ENCODE measurements at regions of chr13 and their contacts with region 1.

Region 1: DNA sequence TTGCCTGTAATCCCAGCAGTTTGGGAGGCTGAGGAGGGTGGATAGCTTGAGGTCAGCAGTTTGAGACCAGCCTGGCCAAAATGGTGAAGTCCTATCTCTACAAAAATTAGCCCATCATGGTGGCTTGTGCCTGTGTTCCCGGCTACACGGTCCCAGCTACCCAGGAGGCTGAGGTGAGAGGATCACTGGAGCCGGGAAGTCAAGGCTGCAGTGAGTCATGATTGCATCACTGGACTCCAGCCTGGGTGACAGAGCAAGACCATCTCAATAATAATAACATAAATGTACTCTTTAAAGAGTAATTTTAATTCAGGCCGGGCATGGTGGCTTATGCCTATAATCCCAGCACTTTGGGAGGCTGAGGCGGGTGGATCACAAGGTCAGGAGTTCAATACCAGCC is 38.7 kb downstream of the SKA3 start:
- DNase-seq: peak in 1 of 14 experiments; percentile 18
- ATAC-seq: no peak
- H3K4me3 ChIP-seq: no peak overlapping the region
- H3K4me3 Mint-ChIP-seq: no peak overlapping the region
- H3K27ac ChIP-seq: no peak overlapping the region
- H3K27ac Mint-ChIP-seq: no peak overlapping the region
- H3K4me1 ChIP-seq: peaks cover 19% of the 10 kb centered on the region
- H3K4me1 Mint-ChIP-seq: peaks cover 27% of the 10 kb centered on the region
- H3K27me3 ChIP-seq: peaks cover 0 to 2% of the 10 kb centered on the region in 2 experiments
- H3K27me3 Mint-ChIP-seq: peaks cover 20% of the 10 kb centered on the region
- CTCF ChIP-seq: no peak

Region 2: DNA sequence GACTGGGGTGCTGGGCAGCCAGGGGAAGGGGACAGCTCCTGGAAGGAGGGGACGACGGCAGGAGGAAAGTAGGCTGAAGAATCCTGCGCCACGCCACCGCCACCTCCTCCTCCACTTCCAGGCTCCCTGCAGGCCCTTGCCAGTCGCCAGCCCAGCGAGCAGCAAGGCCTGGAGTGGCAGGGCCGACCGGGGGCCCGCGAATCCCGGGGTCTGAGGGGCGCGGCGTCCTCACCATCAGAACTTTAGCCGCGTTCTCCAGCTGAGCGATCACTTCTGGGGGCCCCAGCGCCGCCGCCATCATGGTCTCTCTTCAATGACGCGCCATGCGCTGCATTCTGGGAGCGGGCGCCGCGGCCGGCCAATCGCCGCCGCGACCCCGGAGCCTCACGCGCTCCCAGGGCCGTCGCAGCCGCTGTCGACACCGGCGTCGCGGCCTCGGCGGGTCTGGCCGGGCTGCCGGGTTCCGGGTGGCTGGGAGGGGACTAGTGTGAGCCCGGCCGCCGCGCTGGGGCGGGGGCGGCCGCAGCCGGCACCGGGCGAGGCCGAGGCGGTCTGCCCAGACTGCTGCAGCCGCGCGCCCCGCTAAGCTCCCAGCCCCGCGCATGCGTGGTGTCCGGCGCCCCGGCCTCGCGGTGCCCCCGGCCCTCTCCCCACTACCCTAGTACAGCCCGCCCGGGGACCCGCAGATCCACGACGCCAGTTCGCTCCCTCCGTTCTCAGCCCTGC is 235.1 kb before region 1 on chr13 and contains the start of gene XPO4:
- CTCF ChIA-PET with region 1: no interaction called
- POLR2A ChIA-PET with region 1: no interaction called
- intact Hi-C with region 1: loop called in 1 of 2 experiments (anchors 5 kb)
- DNase-seq: peak; percentile 52 to 89 (median 70)
- ATAC-seq: peak; percentile 96
- H3K4me3 ChIP-seq: peak within 1 kb of the TSS; percentile 99
- H3K4me3 Mint-ChIP-seq: peak within 1 kb of the TSS; percentile 97
- H3K27ac ChIP-seq: peak within 1 kb of the TSS; percentile 79 to 88
- H3K27ac Mint-ChIP-seq: peak within 1 kb of the TSS; percentile 90
- H3K4me1 ChIP-seq: peaks cover 22% of the 10 kb centered on the region
- H3K4me1 Mint-ChIP-seq: peaks cover 32% of the 10 kb centered on the region
- H3K27me3 ChIP-seq: no peaks in the 10 kb centered on the region
- H3K27me3 Mint-ChIP-seq: no peaks in the 10 kb centered on the region
- CTCF ChIP-seq: no peak
- total RNA-seq, gene XPO4: 22.5 to 22.7 TPM

Region 3: GRCh38 chr13:21115231-21115630 is 22.5 kb before region 1 on chr13:
- CTCF ChIA-PET with region 1: no interaction called
- POLR2A ChIA-PET with region 1: no interaction called
- intact Hi-C with region 1: loop called in 1 of 2 experiments (anchors 2 kb)
- DNase-seq: no peak
- ATAC-seq: no peak
- H3K4me3 ChIP-seq: no peak overlapping the region
- H3K4me3 Mint-ChIP-seq: no peak overlapping the region
- H3K27ac ChIP-seq: no peak overlapping the region
- H3K27ac Mint-ChIP-seq: no peak overlapping the region
- H3K4me1 ChIP-seq: peaks cover 4% of the 10 kb centered on the region
- H3K4me1 Mint-ChIP-seq: no peaks in the 10 kb centered on the region
- H3K27me3 ChIP-seq: no peaks in the 10 kb centered on the region
- H3K27me3 Mint-ChIP-seq: no peaks in the 10 kb centered on the region
- CTCF ChIP-seq: no peak

Region 4: DNA sequence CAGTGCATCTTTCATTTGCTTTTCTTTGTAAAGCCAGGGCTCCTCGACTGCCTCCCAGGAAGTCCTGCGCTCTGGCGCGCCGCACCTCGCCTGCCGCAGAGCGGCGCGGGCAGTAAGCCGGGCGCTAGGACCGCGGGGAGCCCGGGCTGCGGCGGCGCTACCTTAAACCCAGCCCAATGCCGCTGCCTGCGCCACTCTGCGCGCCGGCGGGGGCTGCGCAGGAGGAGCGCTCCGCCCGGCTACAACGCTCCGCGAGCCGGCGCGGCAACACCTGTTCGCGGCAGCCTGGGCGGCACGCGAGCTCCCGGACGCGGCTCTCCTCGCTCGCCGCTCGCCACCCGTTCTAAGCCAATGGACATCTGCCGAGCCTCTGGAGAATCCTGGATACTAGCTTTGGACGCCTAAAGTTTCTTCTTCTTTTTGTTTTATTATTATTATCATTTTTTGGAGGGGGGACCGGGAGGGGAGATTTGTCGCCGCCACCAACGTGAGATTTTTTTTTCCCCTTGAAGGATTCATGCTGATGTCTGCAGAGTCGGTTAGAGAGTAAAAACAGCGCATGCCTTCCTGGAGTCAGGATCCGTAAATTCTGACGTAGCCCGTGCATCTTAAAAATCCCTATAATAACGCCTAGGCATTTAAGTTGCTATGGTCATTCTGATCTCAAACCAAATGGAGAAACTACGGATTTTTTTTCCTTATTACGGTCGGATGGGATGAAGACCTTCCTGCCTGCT is 533.4 kb after region 1 on chr13 and contains the start of gene FGF9:
- CTCF ChIA-PET with region 1: no interaction called
- POLR2A ChIA-PET with region 1: no interaction called
- intact Hi-C with region 1: loop called in 1 of 2 experiments (anchors 5 kb)
- DNase-seq: peak; percentile 59 to 93 (median 74)
- ATAC-seq: peak; percentile 72
- H3K4me3 ChIP-seq: peak within 1 kb of the TSS; percentile 81
- H3K4me3 Mint-ChIP-seq: peak within 1 kb of the TSS; percentile 92
- H3K27ac ChIP-seq: peak within 1 kb of the TSS in 1 of 2 donors; percentile 2
- H3K27ac Mint-ChIP-seq: peak within 1 kb of the TSS; percentile 77
- H3K4me1 ChIP-seq: peaks cover 62% of the 10 kb centered on the region
- H3K4me1 Mint-ChIP-seq: peaks cover 45% of the 10 kb centered on the region
- H3K27me3 ChIP-seq: peaks cover 18 to 21% of the 10 kb centered on the region in 2 experiments
- H3K27me3 Mint-ChIP-seq: peaks cover 43% of the 10 kb centered on the region
- CTCF ChIP-seq: no peak
- total RNA-seq, gene FGF9: 2.2 to 3.4 TPM

Measured in CD4-positive, alpha-beta T cell (primary cell).